ENCODE measurements at regions of chr20 and their contacts with region 1.

Region 1: GRCh38 chr20:19995220-19995863 is 21.8 kb upstream of the NAA20 start:
- DNase-seq: peak in 5 of 9 donors; percentile 10 to 26 (median 17)
- ATAC-seq: peak; percentile 75
- H3K4me3 ChIP-seq: no peak overlapping the region
- H3K4me3 Mint-ChIP-seq: no peak overlapping the region
- H3K27ac ChIP-seq: no peak overlapping the region
- H3K27ac Mint-ChIP-seq: no peak overlapping the region
- H3K4me1 ChIP-seq: no peaks in the 10 kb centered on the region
- H3K4me1 Mint-ChIP-seq: peaks cover 0 to 3% (median 0%) of the 10 kb centered on the region in 7 donors
- H3K27me3 ChIP-seq: no peaks in the 10 kb centered on the region
- H3K27me3 Mint-ChIP-seq: peaks cover 8 to 17% (median 13%) of the 10 kb centered on the region in 5 donors

Region 2: DNA sequence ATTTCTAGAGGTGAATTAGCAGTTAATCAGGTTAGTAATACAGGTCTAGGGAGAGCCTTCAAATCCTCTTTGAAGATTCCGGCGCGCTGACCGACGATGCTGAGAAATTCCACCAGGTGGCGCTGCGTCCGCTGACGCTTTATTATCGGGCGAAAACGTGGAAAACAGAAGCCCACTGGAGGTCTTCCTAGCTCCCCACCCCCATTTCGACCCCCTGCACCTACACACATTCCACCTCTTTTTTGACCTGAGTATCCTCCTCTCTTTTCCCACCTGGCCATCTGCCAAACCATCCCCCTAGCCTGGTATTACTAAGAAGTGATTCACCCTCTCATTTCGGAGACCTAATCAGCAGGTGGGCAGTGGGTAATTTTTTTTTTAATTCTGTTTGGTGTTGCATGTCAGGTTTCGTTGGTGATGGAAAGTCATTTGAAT is 302.6 kb before region 1 on chr20:
- CTCF ChIA-PET with region 1: no interaction called
- POLR2A ChIA-PET with region 1: no interaction called
- intact Hi-C with region 1: loop called in 1 of 2 experiments (anchors 1 kb)
- DNase-seq: peak in 5 of 9 donors; percentile 3 to 46 (median 22)
- ATAC-seq: peak; percentile 48
- H3K4me3 ChIP-seq: no peak overlapping the region
- H3K4me3 Mint-ChIP-seq: no peak overlapping the region
- H3K27ac ChIP-seq: no peak overlapping the region
- H3K27ac Mint-ChIP-seq: peak overlapping the region in 1 of 9 donors; percentile 28
- H3K4me1 ChIP-seq: no peaks in the 10 kb centered on the region
- H3K4me1 Mint-ChIP-seq: peaks cover 0 to 9% (median 0%) of the 10 kb centered on the region in 7 donors
- H3K27me3 ChIP-seq: no peaks in the 10 kb centered on the region
- H3K27me3 Mint-ChIP-seq: peaks cover 4 to 19% (median 16%) of the 10 kb centered on the region in 5 donors

Region 3: GRCh38 chr20:19784511-19785172 is 210.7 kb before region 1 on chr20:
- CTCF ChIA-PET with region 1: no interaction called
- POLR2A ChIA-PET with region 1: no interaction called
- intact Hi-C with region 1: loop called (anchors 1 to 10 kb)
- DNase-seq: no peak
- ATAC-seq: peak; percentile 60
- H3K4me3 ChIP-seq: no peak overlapping the region
- H3K4me3 Mint-ChIP-seq: no peak overlapping the region
- H3K27ac ChIP-seq: no peak overlapping the region
- H3K27ac Mint-ChIP-seq: no peak overlapping the region
- H3K4me1 ChIP-seq: no peaks in the 10 kb centered on the region
- H3K4me1 Mint-ChIP-seq: peaks cover 0 to 6% (median 0%) of the 10 kb centered on the region in 7 donors
- H3K27me3 ChIP-seq: no peaks in the 10 kb centered on the region
- H3K27me3 Mint-ChIP-seq: peaks cover 0 to 14% (median 6%) of the 10 kb centered on the region in 5 donors

Region 4: DNA sequence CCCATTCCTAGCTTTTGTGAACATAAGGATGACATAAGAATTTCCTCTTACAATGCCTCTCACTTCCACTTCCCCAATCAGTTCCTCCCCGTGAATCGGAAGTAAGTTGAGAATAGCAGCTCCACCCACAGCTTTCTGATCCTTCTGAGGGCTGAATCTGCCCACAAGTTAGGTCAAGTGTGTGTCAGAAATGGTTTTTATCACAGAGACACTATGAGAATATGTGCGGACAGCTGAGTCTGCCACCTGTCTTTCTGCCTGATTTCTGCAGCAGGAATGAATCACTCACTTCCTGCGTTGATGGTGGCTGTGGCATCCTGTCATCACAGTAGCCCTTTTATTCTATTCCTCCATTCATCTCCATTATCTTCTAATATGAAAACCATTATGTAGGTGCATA is 167.1 kb before region 1 on chr20:
- CTCF ChIA-PET with region 1: no interaction called
- POLR2A ChIA-PET with region 1: no interaction called
- intact Hi-C with region 1: no loop called
- DNase-seq: no peak
- ATAC-seq: peak; percentile 85
- H3K4me3 ChIP-seq: no peak overlapping the region
- H3K4me3 Mint-ChIP-seq: peak overlapping the region in 4 of 10 donors; percentile 14 to 37 (median 28)
- H3K27ac ChIP-seq: no peak overlapping the region
- H3K27ac Mint-ChIP-seq: peak overlapping the region in 2 of 9 donors; percentile 16 to 60
- H3K4me1 ChIP-seq: no peaks in the 10 kb centered on the region
- H3K4me1 Mint-ChIP-seq: peaks cover 0 to 12% (median 5%) of the 10 kb centered on the region in 7 donors
- H3K27me3 ChIP-seq: no peaks in the 10 kb centered on the region
- H3K27me3 Mint-ChIP-seq: peaks cover 0 to 24% (median 10%) of the 10 kb centered on the region in 5 donors

Region 5: GRCh38 chr20:20327746-20328145 is 332.4 kb after region 1 on chr20:
- CTCF ChIA-PET with region 1: no interaction called
- POLR2A ChIA-PET with region 1: no interaction called
- intact Hi-C with region 1: no loop called
- DNase-seq: no peak
- ATAC-seq: no peak
- H3K4me3 ChIP-seq: no peak overlapping the region
- H3K4me3 Mint-ChIP-seq: no peak overlapping the region
- H3K27ac ChIP-seq: no peak overlapping the region
- H3K27ac Mint-ChIP-seq: peak overlapping the region in 1 of 9 donors; percentile 46
- H3K4me1 ChIP-seq: no peaks in the 10 kb centered on the region
- H3K4me1 Mint-ChIP-seq: peaks cover 0 to 6% (median 0%) of the 10 kb centered on the region in 7 donors
- H3K27me3 ChIP-seq: peaks cover 0 to 4% of the 10 kb centered on the region in 2 donors
- H3K27me3 Mint-ChIP-seq: peaks cover 9 to 46% (median 27%) of the 10 kb centered on the region in 5 donors